CD4-positive, alpha-beta T cell (primary cell): ENCODE measurements at regions of chr15 and their contacts with region 1.

Region 1: DNA sequence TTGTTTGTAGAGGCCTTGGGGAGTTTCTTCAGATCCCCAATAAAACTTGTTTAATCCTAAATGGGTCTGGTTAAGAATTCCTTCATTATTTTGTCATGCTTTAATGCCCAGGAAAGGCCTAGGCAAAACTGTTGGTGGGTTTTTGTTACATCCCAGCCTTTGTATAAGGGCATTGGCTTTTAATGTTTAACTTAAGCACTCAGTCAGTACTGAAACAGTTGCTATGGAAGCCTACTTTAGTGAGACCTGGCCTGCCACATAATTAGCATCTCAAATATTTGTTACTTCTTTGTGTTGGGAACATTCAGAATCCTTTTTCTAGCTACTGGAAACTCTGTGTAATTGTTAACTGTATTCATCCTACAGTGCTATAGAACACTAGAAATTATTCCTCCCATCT is 369.5 kb upstream of the ATP10A start:
- DNase-seq: no peak
- ATAC-seq: no peak
- H3K4me3 ChIP-seq: no peak overlapping the region
- H3K4me3 Mint-ChIP-seq: no peak overlapping the region
- H3K27ac ChIP-seq: no peak overlapping the region
- H3K27ac Mint-ChIP-seq: no peak overlapping the region
- H3K4me1 ChIP-seq: no peaks in the 10 kb centered on the region
- H3K4me1 Mint-ChIP-seq: no peaks in the 10 kb centered on the region
- H3K27me3 ChIP-seq: no peaks in the 10 kb centered on the region
- H3K27me3 Mint-ChIP-seq: no peaks in the 10 kb centered on the region
- CTCF ChIP-seq: no peak

Region 2: DNA sequence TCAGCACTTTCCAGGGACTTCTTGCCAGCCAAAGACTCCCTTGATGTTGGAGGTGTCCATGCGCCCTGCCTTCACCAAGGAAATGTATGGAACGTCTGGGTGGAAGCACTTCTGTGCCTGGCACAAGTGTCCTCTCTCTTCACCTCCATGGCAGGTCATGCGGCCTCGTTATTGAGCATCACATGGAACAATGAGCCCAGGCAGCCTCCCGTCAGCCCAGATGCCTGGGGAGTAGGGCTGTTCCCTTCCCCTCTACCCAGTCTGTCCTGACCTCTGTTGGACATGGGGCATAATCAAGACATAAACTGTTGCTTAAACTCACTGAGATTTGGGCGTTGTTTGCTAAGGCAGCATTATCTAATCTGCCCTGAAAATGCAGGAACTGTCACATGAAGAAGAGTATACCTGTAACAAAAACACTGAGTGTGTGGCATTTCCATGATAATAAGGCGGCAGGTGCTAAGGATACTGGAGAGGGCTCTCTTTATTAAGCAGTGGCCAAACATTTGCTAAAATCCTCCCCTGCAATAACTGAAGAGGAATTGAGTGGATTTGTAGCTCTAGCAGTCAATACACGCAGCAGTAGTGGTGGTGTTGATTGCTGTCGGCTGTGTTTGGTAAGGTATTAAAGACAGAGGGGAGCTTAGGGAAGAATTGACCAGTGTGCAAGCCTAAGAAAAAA is 31.3 kb before region 1 on chr15:
- CTCF ChIA-PET with region 1: no interaction called
- POLR2A ChIA-PET with region 1: no interaction called
- intact Hi-C with region 1: loop called in 1 of 2 experiments (anchors 1 kb)
- DNase-seq: no peak
- ATAC-seq: no peak
- H3K4me3 ChIP-seq: no peak overlapping the region
- H3K4me3 Mint-ChIP-seq: no peak overlapping the region
- H3K27ac ChIP-seq: no peak overlapping the region
- H3K27ac Mint-ChIP-seq: no peak overlapping the region
- H3K4me1 ChIP-seq: no peaks in the 10 kb centered on the region
- H3K4me1 Mint-ChIP-seq: no peaks in the 10 kb centered on the region
- H3K27me3 ChIP-seq: no peaks in the 10 kb centered on the region
- H3K27me3 Mint-ChIP-seq: peaks cover 3% of the 10 kb centered on the region
- CTCF ChIP-seq: no peak

Region 3: GRCh38 chr15:26438316-26438715 is 205.7 kb after region 1 on chr15:
- CTCF ChIA-PET with region 1: no interaction called
- POLR2A ChIA-PET with region 1: no interaction called
- intact Hi-C with region 1: no loop called
- DNase-seq: no peak
- ATAC-seq: no peak
- H3K4me3 ChIP-seq: no peak overlapping the region
- H3K4me3 Mint-ChIP-seq: no peak overlapping the region
- H3K27ac ChIP-seq: no peak overlapping the region
- H3K27ac Mint-ChIP-seq: no peak overlapping the region
- H3K4me1 ChIP-seq: no peaks in the 10 kb centered on the region
- H3K4me1 Mint-ChIP-seq: no peaks in the 10 kb centered on the region
- H3K27me3 ChIP-seq: no peaks in the 10 kb centered on the region
- H3K27me3 Mint-ChIP-seq: no peaks in the 10 kb centered on the region
- CTCF ChIP-seq: no peak